H1 (cell line): ENCODE measurements at regions of chr12 and their contacts with region 1.

Region 1: GRCh38 chr12:115871714-115872113 is 405.8 kb downstream of the MED13L start:
- DNase-seq: no peak
- H3K4me3 ChIP-seq: no peak overlapping the region
- H3K27ac ChIP-seq: peak overlapping the region; percentile 68; the same call in 1 of the 2 replicates
- H3K4me1 ChIP-seq: peaks cover 13 to 23% (median 18%) of the 10 kb centered on the region in 4 experiments
- H3K27me3 ChIP-seq: no peaks in the 10 kb centered on the region
- CTCF ChIP-seq: peak in 2 of 3 experiments; percentile 39 to 77; a peak in 3 of 4 replicates
- EP300 ChIP-seq: peak in 1 of 2 experiments; percentile 88; a peak in 1 of 3 replicates
- POLR2A ChIP-seq: 0 out of 3 replicates have a peak, but pooled peaks of 1 of the 2 experiments have one; percentile 13
- RAD21 ChIP-seq: peak in 1 of 2 experiments; percentile 43; a peak in 2 of 4 replicates

Region 2: GRCh38 chr12:115763376-115763775 is 108.3 kb before region 1 on chr12:
- CTCF ChIA-PET with region 1: no interaction called
- POLR2A ChIA-PET with region 1: no interaction called
- DNase-seq: no peak
- H3K4me3 ChIP-seq: no peak overlapping the region
- H3K27ac ChIP-seq: no peak overlapping the region
- H3K4me1 ChIP-seq: peaks cover 0 to 5% (median 0%) of the 10 kb centered on the region in 4 experiments; a peak in 1 of 7 replicates
- H3K27me3 ChIP-seq: no peaks in the 10 kb centered on the region
- CTCF ChIP-seq: no peak
- EP300 ChIP-seq: no peak
- POLR2A ChIP-seq: no peak
- RAD21 ChIP-seq: no peak

Region 3: GRCh38 chr12:115857160-115857922 is 14.4 kb before region 1 on chr12:
- CTCF ChIA-PET with region 1: interaction called, 23 read pairs
- POLR2A ChIA-PET with region 1: interaction called, 5 read pairs
- DNase-seq: no peak
- H3K4me3 ChIP-seq: no peak overlapping the region
- H3K27ac ChIP-seq: no peak overlapping the region
- H3K4me1 ChIP-seq: no peaks in the 10 kb centered on the region
- H3K27me3 ChIP-seq: no peaks in the 10 kb centered on the region
- CTCF ChIP-seq: peak; percentile 35 to 54 (median 48)
- EP300 ChIP-seq: no peak
- POLR2A ChIP-seq: no peak
- RAD21 ChIP-seq: peak in 1 of 2 experiments; percentile 40; a peak in 2 of 4 replicates

Region 4: DNA sequence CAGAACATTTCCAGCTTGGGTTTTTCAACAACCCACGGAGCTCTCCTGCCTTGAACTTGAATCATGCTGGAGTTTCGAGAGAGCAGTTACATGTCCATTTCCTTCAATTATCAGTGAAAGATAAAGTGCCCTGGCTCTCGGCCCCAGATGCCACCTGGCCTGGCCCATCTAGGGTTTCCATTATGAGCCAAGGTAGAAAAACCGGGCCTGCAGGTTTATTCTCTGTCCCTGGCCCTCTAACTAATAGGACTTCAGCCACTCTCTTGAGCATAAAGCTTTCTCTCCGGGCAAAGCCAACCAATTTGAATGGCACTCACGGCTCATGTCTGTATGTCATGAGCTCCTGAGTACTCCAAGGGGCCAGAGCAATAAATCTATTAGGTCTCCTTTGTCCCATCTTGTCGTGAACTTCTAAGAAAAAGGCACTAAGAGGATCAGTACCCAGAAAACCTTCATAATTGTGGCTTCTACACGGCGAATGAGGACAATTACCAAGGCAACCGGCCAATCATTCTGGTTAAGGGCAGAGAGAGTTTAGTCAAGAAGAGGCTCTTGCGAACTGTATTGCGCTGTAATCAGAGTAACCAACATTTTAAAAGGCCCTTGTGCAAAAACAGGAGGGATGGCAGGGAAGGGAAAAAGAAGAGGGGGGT is 13.4 kb after region 1 on chr12:
- CTCF ChIA-PET with region 1: interaction called, 35 read pairs
- POLR2A ChIA-PET with region 1: interaction called, 8 read pairs
- DNase-seq: no peak
- H3K4me3 ChIP-seq: no peak overlapping the region
- H3K27ac ChIP-seq: no peak overlapping the region
- H3K4me1 ChIP-seq: no peaks in the 10 kb centered on the region
- H3K27me3 ChIP-seq: no peaks in the 10 kb centered on the region
- CTCF ChIP-seq: no peak
- EP300 ChIP-seq: no peak
- POLR2A ChIP-seq: no peak
- RAD21 ChIP-seq: no peak

Region 5: DNA sequence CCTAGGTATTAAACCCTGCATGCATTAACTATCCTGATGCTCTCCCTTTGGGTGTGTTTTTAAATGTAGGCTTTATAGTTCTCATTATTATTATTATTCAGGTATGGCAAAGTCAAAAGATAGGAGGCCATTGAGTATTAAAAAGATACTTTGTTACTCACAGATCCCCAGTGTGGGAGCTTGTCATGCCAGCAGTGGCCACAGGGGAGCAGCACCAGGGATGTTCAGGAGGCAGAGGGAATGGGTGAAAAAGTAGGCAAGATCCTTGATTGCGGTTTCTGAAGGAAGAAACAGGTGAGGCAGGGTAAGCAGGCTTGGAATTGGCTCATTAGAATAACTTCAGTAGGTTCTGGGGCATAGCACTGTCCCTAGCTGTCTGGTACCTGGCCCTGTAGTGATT is 23.5 kb after region 1 on chr12:
- CTCF ChIA-PET with region 1: interaction called, 22 read pairs
- POLR2A ChIA-PET with region 1: interaction called, 8 read pairs
- DNase-seq: peak in 1 of 2 experiments; percentile 61
- H3K4me3 ChIP-seq: no peak overlapping the region
- H3K27ac ChIP-seq: no peak overlapping the region
- H3K4me1 ChIP-seq: peaks cover 0 to 4% (median 2%) of the 10 kb centered on the region in 4 experiments; a peak in 2 of 7 replicates
- H3K27me3 ChIP-seq: no peaks in the 10 kb centered on the region
- CTCF ChIP-seq: peak; percentile 54 to 79 (median 71)
- EP300 ChIP-seq: no peak
- POLR2A ChIP-seq: no peak
- RAD21 ChIP-seq: peak; percentile 45 to 55

Region 6: DNA sequence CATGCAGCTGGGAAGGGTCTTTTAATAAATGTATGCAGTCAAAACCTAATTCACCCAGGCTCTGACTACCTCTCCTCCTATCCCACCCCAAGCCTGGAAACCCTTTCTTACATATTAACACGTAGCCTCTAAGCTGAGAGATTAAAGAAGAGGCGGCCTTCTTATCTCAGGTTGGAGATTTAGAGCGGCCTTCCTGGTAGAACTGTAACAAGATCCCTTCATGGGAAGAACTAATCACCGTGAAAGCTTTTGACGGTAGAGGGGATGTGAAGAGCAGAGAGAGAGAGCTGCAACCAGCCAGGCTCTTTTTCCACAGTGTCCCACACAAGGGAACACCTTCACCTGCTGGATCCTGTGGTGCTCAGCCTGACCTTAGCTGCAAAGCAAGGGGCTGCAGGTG is 38.3 kb after region 1 on chr12:
- CTCF ChIA-PET with region 1: interaction called, 16 read pairs
- POLR2A ChIA-PET with region 1: interaction called, 3 read pairs
- DNase-seq: no peak
- H3K4me3 ChIP-seq: no peak overlapping the region
- H3K27ac ChIP-seq: no peak overlapping the region
- H3K4me1 ChIP-seq: no peaks in the 10 kb centered on the region
- H3K27me3 ChIP-seq: no peaks in the 10 kb centered on the region
- CTCF ChIP-seq: no peak
- EP300 ChIP-seq: no peak
- POLR2A ChIP-seq: no peak
- RAD21 ChIP-seq: no peak

Region 7: DNA sequence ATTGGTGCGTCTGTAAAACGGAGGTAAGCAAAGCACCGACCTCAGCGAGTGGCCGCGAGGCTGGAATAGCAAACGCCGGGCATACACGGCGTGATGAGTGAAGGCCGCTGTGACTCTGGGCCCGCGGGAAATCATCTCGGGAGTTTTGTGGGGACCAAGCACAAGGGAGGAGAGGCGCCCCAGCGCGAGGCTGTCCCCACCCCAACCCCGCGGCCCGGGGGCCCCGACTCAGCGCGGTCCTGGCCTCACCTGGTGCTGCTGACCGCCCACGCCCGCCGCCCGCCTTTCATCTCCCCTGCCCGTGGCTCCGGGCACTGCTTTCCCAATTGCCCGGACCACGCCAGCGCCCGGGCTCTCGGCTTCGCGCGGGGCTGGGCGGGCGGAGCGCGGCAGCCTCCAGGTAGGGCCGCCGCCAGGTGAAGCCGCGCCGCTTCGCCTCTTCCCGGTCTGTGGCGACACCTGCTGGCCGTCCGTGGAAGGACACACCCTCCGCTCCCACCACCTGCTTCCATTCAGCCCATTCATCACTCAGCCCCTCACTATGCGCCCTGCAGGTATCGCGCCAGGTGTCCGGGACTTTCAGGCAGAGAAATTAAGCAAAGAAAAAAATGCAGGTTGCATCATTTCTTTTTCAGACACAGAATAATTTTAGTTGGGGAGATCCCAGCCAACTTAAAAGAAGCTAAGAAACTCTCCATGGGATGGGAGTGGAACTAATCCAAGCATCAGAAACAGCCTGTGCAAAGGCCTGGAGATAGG is 45.4 kb after region 1 on chr12:
- CTCF ChIA-PET with region 1: interaction called, 36 read pairs
- POLR2A ChIA-PET with region 1: interaction called, 3 read pairs
- DNase-seq: peak; percentile 62 to 99
- H3K4me3 ChIP-seq: peak overlapping the region; percentile 4 to 64 (median 38); a peak in 7 of 8 replicates
- H3K27ac ChIP-seq: no peak overlapping the region
- H3K4me1 ChIP-seq: peaks cover 0 to 3% (median under 1%) of the 10 kb centered on the region in 4 experiments; a peak in 2 of 7 replicates
- H3K27me3 ChIP-seq: peaks cover 0 to 7% (median 4%) of the 10 kb centered on the region in 4 experiments; a peak in 3 of 7 replicates
- CTCF ChIP-seq: peak; percentile 88 to 99 (median 96)
- EP300 ChIP-seq: no peak; a peak in 1 of 3 replicates
- POLR2A ChIP-seq: no peak
- RAD21 ChIP-seq: peak; percentile 99

Region 8: DNA sequence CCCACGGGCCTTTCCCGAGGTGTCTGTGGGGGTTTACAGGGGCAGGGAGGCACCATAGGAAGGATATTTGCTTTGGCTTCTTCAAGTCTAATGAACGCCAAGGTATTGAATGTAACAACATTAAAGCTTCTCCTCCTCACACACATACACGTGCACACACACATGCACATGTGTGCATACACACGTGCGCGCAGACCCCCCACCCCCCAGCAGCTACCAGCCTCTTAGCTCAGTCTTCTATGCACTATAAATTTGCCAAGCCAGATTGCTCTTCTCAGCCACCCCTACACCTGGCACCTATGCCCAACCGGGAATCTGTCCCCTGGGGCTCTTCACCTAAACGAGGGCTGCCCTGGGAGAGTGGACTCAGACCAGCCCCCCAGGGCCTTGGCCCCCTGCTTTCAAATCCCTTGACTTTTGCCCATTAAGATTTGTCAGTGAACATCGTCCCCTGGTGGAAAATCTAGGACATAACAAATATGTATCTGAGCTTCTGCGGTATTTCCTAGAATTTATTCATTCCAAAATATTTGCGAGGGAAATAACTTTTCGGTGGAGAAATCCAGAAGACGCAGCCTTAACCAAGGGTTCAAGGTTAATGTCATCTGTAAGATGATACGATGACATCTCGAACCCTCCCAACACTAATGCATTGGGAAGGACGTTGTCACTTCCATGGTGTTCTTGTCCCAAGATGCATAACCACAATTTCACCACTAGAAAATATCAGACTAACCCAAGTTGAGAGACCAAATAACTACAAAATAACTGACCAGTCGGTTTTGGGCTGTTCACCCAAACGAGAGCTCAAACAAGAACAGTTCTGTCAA is 75.4 kb after region 1 on chr12:
- CTCF ChIA-PET with region 1: interaction called, 14 read pairs
- POLR2A ChIA-PET with region 1: interaction called, 4 read pairs
- DNase-seq: no peak
- H3K4me3 ChIP-seq: no peak overlapping the region
- H3K27ac ChIP-seq: no peak overlapping the region
- H3K4me1 ChIP-seq: peaks cover 0 to 6% (median 2%) of the 10 kb centered on the region in 4 experiments; a peak in 4 of 7 replicates
- H3K27me3 ChIP-seq: no peaks in the 10 kb centered on the region
- CTCF ChIP-seq: peak in 2 of 3 experiments; percentile 53 to 57; a peak in 2 of 4 replicates
- EP300 ChIP-seq: no peak
- POLR2A ChIP-seq: no peak
- RAD21 ChIP-seq: peak; percentile 69 to 76